Activated CD8-positive, alpha-beta memory T cell treated with anti-CD3 and anti-CD28 coated beads, Interleukin-2, amount 10 ng/mL, durations not matched to agents 7 days and 5 days (primary cell): ENCODE measurements at regions of chr15 and their contacts with region 1.

Region 1: DNA sequence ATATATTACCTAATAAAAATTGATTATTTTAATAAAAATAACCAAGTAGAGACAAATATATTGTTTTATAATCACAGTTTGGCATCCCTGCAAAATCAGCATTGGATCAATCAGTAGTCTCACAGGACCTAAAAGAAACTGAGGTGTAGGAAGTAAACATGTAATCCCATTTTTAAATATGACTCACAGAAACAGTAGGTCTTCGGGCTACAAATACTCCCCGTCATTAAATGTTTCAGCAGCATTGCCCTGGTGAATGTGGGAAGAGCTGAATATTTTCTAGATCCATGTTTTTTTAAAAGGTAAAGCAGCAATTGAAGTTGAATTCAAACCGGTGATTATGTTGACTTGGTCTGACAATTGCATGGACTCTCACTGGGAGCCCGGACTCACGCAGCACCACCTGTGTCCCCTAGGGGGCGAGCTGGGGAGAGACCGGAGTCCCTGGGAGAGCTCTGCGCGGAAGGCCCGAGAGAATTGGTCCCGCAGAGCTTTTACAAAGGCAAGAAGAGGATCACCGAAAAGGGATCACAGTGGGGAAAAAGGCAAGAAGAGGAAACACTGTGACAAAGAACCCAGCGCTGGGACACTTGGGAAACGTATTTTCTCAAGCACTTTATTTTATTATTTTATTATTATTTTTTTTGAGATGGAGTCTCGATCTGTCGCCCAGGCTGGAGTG is 17.2 kb upstream of the USP3 start:
- DNase-seq: peak; percentile 94
- ATAC-seq: peak; percentile 96
- H3K4me3 Mint-ChIP-seq: peak overlapping the region; percentile 53
- H3K27ac Mint-ChIP-seq: peak overlapping the region; percentile 70
- H3K4me1 Mint-ChIP-seq: peaks cover 51% of the 10 kb centered on the region
- H3K27me3 Mint-ChIP-seq: peaks cover 7% of the 10 kb centered on the region

Region 2: DNA sequence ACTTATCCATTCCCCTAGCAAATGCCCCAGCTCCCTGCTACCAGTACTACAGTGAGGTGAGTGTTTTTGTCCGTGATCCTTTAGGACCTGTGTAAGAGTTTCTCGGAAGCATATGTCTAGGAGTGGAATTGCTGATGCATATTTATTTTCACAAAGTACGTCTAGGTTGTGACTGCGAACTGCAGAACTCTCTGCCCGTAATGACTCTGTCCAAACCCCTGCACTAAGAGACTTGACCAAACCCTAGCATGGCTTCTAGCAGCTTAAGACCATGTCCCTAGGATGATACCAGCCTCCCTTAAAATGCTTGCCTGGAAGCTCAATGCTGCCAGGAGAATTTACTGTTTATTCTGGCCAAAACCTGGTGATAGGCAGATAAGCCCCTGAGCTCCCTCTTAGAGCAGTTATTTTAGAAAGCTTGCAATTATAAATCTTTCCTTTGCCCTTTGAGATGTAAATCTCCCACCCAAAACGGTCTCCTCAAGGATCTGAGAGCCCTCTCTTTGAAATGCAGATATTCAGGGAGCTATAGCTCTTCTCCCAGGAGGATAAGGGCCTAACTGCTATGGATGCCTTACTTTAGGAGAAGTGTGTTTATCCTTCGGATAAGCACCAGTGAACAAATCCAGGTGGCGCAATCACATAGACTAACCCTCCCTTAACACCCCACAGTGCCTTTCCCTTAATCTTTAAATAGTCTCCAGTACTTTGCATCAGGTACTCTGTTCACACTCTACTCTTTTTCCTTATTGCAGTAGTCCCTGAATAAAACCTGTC is 90.9 kb before region 1 on chr15:
- CTCF ChIA-PET with region 1: no interaction called
- DNase-seq: no peak
- ATAC-seq: no peak
- H3K4me3 Mint-ChIP-seq: no peak overlapping the region
- H3K27ac Mint-ChIP-seq: no peak overlapping the region
- H3K4me1 Mint-ChIP-seq: peaks cover 25% of the 10 kb centered on the region
- H3K27me3 Mint-ChIP-seq: peaks cover 24% of the 10 kb centered on the region

Region 3: DNA sequence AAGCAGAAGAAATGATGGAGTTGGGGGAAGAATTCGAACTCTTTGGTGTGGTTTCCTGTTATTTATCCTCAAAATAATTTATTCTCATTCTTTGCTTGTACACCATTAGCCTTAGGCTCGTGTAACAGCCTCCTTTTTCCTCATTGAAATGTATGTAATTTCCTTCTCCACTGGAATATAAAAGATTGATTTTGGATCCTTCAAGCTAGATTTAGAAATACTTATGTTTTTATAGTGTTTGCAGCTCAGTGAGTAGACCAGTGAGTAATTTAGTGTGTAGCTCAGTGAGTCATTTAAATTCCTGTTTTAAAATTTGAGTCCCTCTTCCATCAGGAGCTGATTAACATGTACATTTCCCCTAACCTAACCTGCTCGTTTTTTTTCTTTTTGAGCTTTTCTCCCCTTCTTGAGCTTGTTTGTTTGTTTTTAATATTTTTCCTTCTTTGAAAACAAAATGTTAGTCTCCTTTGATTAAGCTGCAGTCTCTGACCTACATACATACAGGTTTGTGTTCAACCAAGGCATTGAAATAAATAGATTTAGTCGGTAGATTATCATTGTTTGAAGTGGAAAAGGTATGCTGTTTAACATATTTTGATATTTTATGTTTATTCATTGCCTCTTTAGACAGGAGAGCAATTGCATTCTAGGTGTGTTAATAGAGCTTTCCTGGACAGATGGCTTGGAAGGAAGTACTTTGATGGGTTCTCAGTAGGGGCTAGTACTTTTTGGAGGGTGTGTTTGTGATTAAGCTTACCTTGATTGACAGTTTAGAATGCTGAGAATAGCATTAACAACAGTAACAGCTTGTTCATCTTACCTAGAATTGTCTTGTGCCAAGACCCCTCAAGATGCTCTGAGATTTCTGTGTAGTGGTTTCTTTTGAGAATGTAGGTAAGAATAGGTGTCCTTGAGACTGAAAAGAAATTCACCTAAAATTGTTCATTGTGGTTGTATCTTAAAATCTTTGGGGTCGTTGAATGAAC is 23.0 kb after region 1 on chr15:
- CTCF ChIA-PET with region 1: interaction called, 88 read pairs
- DNase-seq: no peak
- ATAC-seq: no peak
- H3K4me3 Mint-ChIP-seq: no peak overlapping the region
- H3K27ac Mint-ChIP-seq: peak overlapping the region; percentile 5
- H3K4me1 Mint-ChIP-seq: peaks cover 73% of the 10 kb centered on the region
- H3K27me3 Mint-ChIP-seq: no peaks in the 10 kb centered on the region